ENCODE measurements at regions of chr10 and their contacts with region 1.

Region 1: GRCh38 chr10:1109795-1110673 is 53.8 kb downstream of the WDR37 start:
- DNase-seq: peak; percentile 56 to 88
- ATAC-seq: peak; percentile 88 to 94 (median 92)
- H3K4me3 ChIP-seq: no peak overlapping the region
- H3K4me3 Mint-ChIP-seq: peak overlapping the region; percentile 61
- H3K27ac ChIP-seq: peak overlapping the region; percentile 64
- H3K27ac Mint-ChIP-seq: peak overlapping the region; percentile 87 to 92
- H3K4me1 ChIP-seq: peaks cover 24% of the 10 kb centered on the region
- H3K4me1 Mint-ChIP-seq: peaks cover 56 to 70% of the 10 kb centered on the region in 2 donors
- H3K27me3 ChIP-seq: no peaks in the 10 kb centered on the region
- H3K27me3 Mint-ChIP-seq: no peaks in the 10 kb centered on the region
- CTCF ChIP-seq: peak; percentile 67

Region 2: GRCh38 chr10:819326-819725 is 290.7 kb before region 1 on chr10:
- intact Hi-C with region 1: no loop called
- DNase-seq: no peak
- ATAC-seq: no peak
- H3K4me3 ChIP-seq: no peak overlapping the region
- H3K4me3 Mint-ChIP-seq: no peak overlapping the region
- H3K27ac ChIP-seq: no peak overlapping the region
- H3K27ac Mint-ChIP-seq: peak overlapping the region in 1 of 2 donors; percentile 15
- H3K4me1 ChIP-seq: peaks cover 24% of the 10 kb centered on the region
- H3K4me1 Mint-ChIP-seq: peaks cover 8 to 28% of the 10 kb centered on the region in 2 donors
- H3K27me3 ChIP-seq: no peaks in the 10 kb centered on the region
- H3K27me3 Mint-ChIP-seq: no peaks in the 10 kb centered on the region
- CTCF ChIP-seq: no peak

Region 3: GRCh38 chr10:955820-956217 is 154.2 kb before region 1 on chr10:
- intact Hi-C with region 1: no loop called
- DNase-seq: no peak
- ATAC-seq: no peak
- H3K4me3 ChIP-seq: no peak overlapping the region
- H3K4me3 Mint-ChIP-seq: no peak overlapping the region
- H3K27ac ChIP-seq: no peak overlapping the region
- H3K27ac Mint-ChIP-seq: no peak overlapping the region
- H3K4me1 ChIP-seq: no peaks in the 10 kb centered on the region
- H3K4me1 Mint-ChIP-seq: peaks cover 0 to 4% of the 10 kb centered on the region in 2 donors
- H3K27me3 ChIP-seq: no peaks in the 10 kb centered on the region
- H3K27me3 Mint-ChIP-seq: peaks cover 7 to 9% of the 10 kb centered on the region in 2 donors
- CTCF ChIP-seq: no peak

Region 4: DNA sequence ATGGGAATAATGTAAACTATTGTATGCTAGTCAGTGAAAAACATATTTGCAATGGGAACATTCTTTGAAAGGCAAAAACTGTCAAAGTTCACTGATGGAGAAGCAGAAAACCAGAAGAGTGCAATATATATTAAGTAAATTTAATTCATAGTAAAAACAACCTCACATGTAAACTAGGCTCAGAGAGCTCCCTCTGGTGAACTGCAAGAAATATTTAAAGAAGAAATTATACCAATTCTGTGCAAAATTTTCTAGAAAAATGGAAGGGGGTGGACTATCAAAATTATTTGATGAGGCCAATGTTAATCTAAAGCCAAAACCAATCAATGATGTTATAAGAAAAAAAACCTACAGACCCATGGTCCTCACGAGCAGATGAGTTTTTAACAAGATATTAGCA is 277.4 kb after region 1 on chr10:
- intact Hi-C with region 1: loop called (anchors 1 kb)
- DNase-seq: no peak
- ATAC-seq: no peak
- H3K4me3 ChIP-seq: no peak overlapping the region
- H3K4me3 Mint-ChIP-seq: no peak overlapping the region
- H3K27ac ChIP-seq: no peak overlapping the region
- H3K27ac Mint-ChIP-seq: no peak overlapping the region
- H3K4me1 ChIP-seq: no peaks in the 10 kb centered on the region
- H3K4me1 Mint-ChIP-seq: no peaks in the 10 kb centered on the region
- H3K27me3 ChIP-seq: peaks cover 2% of the 10 kb centered on the region
- H3K27me3 Mint-ChIP-seq: peaks cover 19 to 55% of the 10 kb centered on the region in 2 donors
- CTCF ChIP-seq: no peak